GM12878 (cell line): ENCODE measurements at regions of chr7 and their contacts with region 1.

Region 1: DNA sequence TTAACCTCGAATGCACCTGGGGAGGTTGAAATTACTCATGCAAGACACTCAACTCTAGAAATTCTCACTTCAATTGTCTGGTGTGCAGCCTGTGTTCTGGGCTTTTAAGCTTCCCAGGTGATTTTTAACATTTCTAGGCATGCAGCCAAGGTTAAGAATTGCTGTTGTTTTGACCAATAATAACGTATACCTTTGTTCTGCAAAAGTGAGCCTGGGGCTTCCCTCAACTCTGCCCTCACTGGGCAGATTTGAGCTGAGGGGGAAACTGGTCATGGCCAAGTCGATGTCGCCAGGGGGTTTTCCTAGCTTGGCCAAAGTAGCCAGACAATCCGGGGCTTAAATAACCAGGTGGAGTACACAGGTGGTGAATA is 568 bp downstream of the PRSS2 start:
- DNase-seq: peak; percentile 73
- ATAC-seq: peak; percentile 89
- H3K4me3 ChIP-seq: no peak overlapping the region
- H3K27ac ChIP-seq: no peak overlapping the region
- H3K4me1 ChIP-seq: peaks cover 19% of the 10 kb centered on the region
- H3K27me3 ChIP-seq: no peaks in the 10 kb centered on the region
- CTCF ChIP-seq: no peak
- EP300 ChIP-seq: peak; percentile 43 to 51; a peak in 2 of 4 replicates
- POLR2A ChIP-seq: no peak
- RAD21 ChIP-seq: no peak

Region 2: DNA sequence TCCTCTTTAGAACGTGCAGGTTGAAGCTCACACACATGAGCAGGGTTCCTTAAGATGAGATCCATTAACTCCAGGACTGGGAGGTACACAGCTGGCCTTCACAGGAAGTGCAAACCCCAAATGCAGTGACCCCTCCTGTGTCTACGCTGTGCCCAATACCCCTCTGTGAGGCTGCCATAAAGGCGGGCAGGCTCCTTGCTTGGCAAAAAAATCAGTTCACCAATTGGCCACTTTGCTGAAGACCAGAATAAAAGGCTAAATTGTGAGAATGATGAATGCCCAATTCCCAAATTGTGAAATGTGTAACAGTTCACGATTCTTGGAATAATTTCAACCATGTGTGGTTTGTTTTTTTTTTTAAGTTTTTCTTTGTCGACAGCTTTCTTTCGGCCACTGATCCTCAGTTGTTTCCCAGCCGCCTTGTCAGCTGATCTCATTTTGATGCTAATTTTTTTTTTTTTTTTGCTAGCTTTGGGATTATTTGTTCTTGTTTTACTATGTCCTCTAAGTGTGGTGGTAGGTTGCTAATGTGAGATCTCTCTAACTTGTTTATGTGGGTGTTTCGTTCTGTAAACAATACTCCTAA is 411.6 kb before region 1 on chr7:
- CTCF ChIA-PET with region 1: no interaction called
- POLR2A ChIA-PET with region 1: no interaction called
- RAD21 ChIA-PET with region 1: no interaction called
- SMC1A ChIA-PET with region 1: no interaction called
- in situ Hi-C with region 1: no loop called
- intact Hi-C with region 1: no loop called
- DNase-seq: no peak
- ATAC-seq: no peak
- H3K4me3 ChIP-seq: no peak overlapping the region
- H3K27ac ChIP-seq: no peak overlapping the region
- H3K4me1 ChIP-seq: no peaks in the 10 kb centered on the region
- H3K27me3 ChIP-seq: no peaks in the 10 kb centered on the region; a peak in 1 of 4 replicates
- CTCF ChIP-seq: no peak
- EP300 ChIP-seq: no peak
- POLR2A ChIP-seq: no peak
- RAD21 ChIP-seq: no peak

Region 3: GRCh38 chr7:142796608-142797385 is 25.5 kb after region 1 on chr7:
- CTCF ChIA-PET with region 1: interaction called, 1,055 read pairs
- POLR2A ChIA-PET with region 1: interaction called, 5 read pairs
- RAD21 ChIA-PET with region 1: interaction called, 7 read pairs
- SMC1A ChIA-PET with region 1: interaction called, 10 read pairs
- in situ Hi-C with region 1: no loop called
- intact Hi-C with region 1: no loop called
- DNase-seq: no peak
- ATAC-seq: peak; percentile 66
- H3K4me3 ChIP-seq: peak overlapping the region; percentile 71
- H3K27ac ChIP-seq: peak overlapping the region; percentile 62
- H3K4me1 ChIP-seq: peaks cover 6% of the 10 kb centered on the region
- H3K27me3 ChIP-seq: no peaks in the 10 kb centered on the region
- CTCF ChIP-seq: no peak
- EP300 ChIP-seq: no peak
- POLR2A ChIP-seq: no peak; the same call in 1 of the 2 replicates
- RAD21 ChIP-seq: no peak

Region 4: GRCh38 chr7:142853739-142854371 is 82.5 kb after region 1 on chr7:
- CTCF ChIA-PET with region 1: no interaction called
- POLR2A ChIA-PET with region 1: no interaction called
- RAD21 ChIA-PET with region 1: no interaction called
- SMC1A ChIA-PET with region 1: no interaction called
- in situ Hi-C with region 1: no loop called
- intact Hi-C with region 1: no loop called
- DNase-seq: no peak
- ATAC-seq: peak; percentile 92
- H3K4me3 ChIP-seq: peak overlapping the region; percentile 96
- H3K27ac ChIP-seq: no peak overlapping the region
- H3K4me1 ChIP-seq: no peaks in the 10 kb centered on the region
- H3K27me3 ChIP-seq: peaks cover 0 to 8% of the 10 kb centered on the region in 2 experiments
- CTCF ChIP-seq: peak; percentile 75 to 83 (median 81)
- EP300 ChIP-seq: no peak
- POLR2A ChIP-seq: no peak
- RAD21 ChIP-seq: peak; percentile 71